ENCODE measurements at regions of chr4 and their contacts with region 1.

Region 1: DNA sequence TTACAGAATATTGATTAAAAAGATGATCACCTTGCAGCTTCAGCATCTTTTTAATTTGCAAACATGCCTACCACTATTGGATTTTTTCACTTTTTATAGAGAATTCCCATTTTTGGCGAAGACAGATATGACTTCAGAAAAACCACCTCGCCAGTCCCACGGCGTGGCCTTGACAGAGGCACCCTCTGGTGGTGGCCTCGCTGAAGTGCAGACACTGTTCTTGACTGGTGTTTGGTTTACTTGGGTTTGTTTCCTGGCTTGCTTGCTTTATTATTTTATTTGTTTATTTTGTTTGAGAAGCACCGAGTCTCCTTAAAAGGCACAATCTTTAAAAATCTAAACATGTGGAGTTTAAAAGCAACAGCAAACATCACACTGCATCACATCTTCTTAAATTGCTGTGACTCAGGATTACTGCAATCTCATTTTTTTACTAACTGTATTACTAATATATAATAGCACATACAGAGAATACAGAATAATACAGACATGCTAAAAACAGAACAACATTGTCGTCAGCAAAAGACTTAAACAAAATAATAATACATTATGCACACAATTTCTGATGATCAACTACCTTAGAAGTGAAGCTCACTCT is 13.1 kb upstream of the AMTN start:
- DNase-seq: peak; percentile 69
- ATAC-seq: peak; percentile 64
- H3K4me3 Mint-ChIP-seq: no peak overlapping the region
- H3K27ac Mint-ChIP-seq: no peak overlapping the region
- H3K4me1 Mint-ChIP-seq: no peaks in the 10 kb centered on the region
- H3K27me3 Mint-ChIP-seq: no peaks in the 10 kb centered on the region

Region 2: GRCh38 chr4:69896530-69897116 is 608.6 kb before region 1 on chr4:
- CTCF ChIA-PET with region 1: no interaction called
- POLR2A ChIA-PET with region 1: no interaction called
- intact Hi-C with region 1: loop called in 1 of 2 experiments (anchors 10 kb)
- DNase-seq: no peak
- ATAC-seq: no peak
- H3K4me3 Mint-ChIP-seq: no peak overlapping the region
- H3K27ac Mint-ChIP-seq: no peak overlapping the region
- H3K4me1 Mint-ChIP-seq: no peaks in the 10 kb centered on the region
- H3K27me3 Mint-ChIP-seq: peaks cover 7% of the 10 kb centered on the region

Region 3: GRCh38 chr4:70473679-70474078 is 31.6 kb before region 1 on chr4:
- CTCF ChIA-PET with region 1: no interaction called
- POLR2A ChIA-PET with region 1: no interaction called
- intact Hi-C with region 1: no loop called
- DNase-seq: no peak
- ATAC-seq: no peak
- H3K4me3 Mint-ChIP-seq: no peak overlapping the region
- H3K27ac Mint-ChIP-seq: no peak overlapping the region
- H3K4me1 Mint-ChIP-seq: no peaks in the 10 kb centered on the region
- H3K27me3 Mint-ChIP-seq: no peaks in the 10 kb centered on the region

Region 4: GRCh38 chr4:70518716-70519115 is 13.5 kb after region 1 on chr4:
- CTCF ChIA-PET with region 1: no interaction called
- POLR2A ChIA-PET with region 1: no interaction called
- intact Hi-C with region 1: no loop called
- DNase-seq: no peak
- ATAC-seq: no peak
- H3K4me3 Mint-ChIP-seq: no peak overlapping the region
- H3K27ac Mint-ChIP-seq: no peak overlapping the region
- H3K4me1 Mint-ChIP-seq: no peaks in the 10 kb centered on the region
- H3K27me3 Mint-ChIP-seq: peaks cover 6% of the 10 kb centered on the region

Measured in activated CD4-positive, alpha-beta T cell treated with anti-CD3 and anti-CD28 coated beads for 36 hours (primary cell).